ENCODE measurements at regions of chr16 and their contacts with region 1.

Region 1: DNA sequence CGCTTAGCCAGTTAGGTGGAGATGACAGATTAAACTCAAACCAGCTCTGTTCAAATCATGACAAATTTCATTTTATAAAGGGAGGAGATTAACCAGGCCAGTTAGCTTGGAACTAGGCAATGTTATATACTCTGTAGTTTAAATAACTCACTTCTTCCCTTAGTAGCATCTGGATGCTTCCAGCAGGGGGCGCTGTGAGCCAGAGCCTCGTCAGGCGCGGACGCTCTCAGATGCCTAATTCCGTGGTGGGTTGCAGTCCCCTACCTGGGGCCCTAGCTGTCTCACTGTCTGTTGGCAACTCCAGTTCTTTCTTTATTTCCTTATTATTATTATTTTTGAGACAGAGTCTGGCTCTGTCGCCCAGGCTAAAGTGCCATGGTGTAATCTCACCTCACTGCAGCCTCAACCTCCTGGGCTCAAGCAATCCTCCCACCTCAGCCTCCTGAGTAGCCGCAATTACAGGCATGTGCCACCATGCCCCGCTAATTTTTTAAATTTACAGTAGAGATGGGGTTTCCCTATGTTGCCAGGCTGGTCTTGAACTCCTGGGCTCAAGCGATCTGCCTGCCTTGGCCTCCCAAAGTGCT is 17.3 kb upstream of the WFDC1 start:
- DNase-seq: peak; percentile 42 to 89
- ATAC-seq: peak; percentile 89

Region 2: GRCh38 chr16:84484579-84485254 is 207.4 kb after region 1 on chr16:
- intact Hi-C with region 1: loop called in 1 of 2 experiments (anchors 5 kb)
- DNase-seq: peak in 1 of 2 donors; percentile 62
- ATAC-seq: peak; percentile 87